ENCODE measurements at regions of chr10 and their contacts with region 1.

Region 1: DNA sequence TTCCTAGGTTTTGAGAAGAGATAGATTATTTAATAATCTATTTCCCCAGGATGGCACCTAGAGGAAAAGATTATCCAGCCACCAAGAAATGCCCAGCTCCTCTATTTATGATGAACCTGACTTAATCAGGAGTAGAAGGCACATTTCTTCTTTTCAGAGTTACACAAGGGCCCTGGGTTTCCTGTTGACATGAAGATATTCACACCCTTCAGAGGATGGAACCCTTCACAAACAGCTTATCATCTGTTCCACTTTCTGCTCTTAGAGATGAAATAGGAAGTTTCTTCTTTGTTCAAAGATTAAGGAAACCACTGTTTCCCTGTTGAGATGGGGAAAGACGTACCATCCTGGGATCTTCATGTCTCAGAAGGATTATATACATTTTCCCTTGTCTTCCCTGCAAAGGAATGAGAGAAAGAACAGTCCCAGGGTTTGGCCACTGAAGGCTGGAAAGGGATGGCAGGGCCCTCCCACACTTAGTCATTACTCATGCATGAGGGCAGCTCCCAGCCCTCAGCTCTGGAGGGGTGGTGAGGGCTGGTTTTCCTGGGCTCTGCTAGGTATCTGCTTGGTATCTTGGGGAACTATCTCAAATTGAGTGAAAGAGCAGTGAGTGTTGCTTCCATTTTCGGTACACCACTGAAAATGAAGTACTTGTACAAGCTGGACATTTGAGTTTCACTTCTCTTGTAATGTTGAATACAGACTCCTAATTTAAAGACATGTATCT is 64.0 kb downstream of the MTPAP start:
- DNase-seq: no peak
- ATAC-seq: peak; percentile 49
- H3K4me3 Mint-ChIP-seq: peak overlapping the region; percentile 21
- H3K27ac Mint-ChIP-seq: peak overlapping the region; percentile 81
- H3K4me1 Mint-ChIP-seq: peaks cover 36% of the 10 kb centered on the region
- H3K27me3 Mint-ChIP-seq: no peaks in the 10 kb centered on the region
- CTCF ChIP-seq: no peak

Region 2: GRCh38 chr10:30348378-30348776 is 63.3 kb after region 1 on chr10:
- CTCF ChIA-PET with region 1: no interaction called
- POLR2A ChIA-PET with region 1: interaction called, 20 read pairs
- intact Hi-C with region 1: no loop called
- DNase-seq: no peak
- ATAC-seq: no peak
- H3K4me3 Mint-ChIP-seq: peak overlapping the region; percentile 99
- H3K27ac Mint-ChIP-seq: peak overlapping the region; percentile 95
- H3K4me1 Mint-ChIP-seq: peaks cover 46% of the 10 kb centered on the region
- H3K27me3 Mint-ChIP-seq: no peaks in the 10 kb centered on the region
- CTCF ChIP-seq: no peak

Region 3: DNA sequence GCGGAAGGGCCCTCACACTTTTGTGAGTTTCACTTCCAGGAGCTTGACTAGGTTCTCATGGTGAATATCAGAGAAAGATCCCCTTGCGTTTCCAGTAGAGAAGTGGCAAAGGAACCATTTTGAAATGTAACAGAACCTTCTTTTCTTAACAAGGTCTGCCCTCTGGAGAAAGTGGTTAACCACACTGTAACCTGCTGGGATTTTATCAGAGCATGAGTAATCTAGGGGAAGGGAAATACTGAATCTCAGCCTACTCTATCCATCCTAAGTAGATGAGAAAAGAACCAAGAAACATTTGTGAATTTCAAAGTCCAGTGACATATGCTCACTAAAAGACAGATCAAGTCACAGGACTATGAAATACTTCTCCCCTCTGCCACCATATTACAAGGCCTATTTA is 1269.5 kb after region 1 on chr10:
- CTCF ChIA-PET with region 1: no interaction called
- POLR2A ChIA-PET with region 1: no interaction called
- intact Hi-C with region 1: no loop called
- DNase-seq: no peak
- ATAC-seq: no peak
- H3K4me3 Mint-ChIP-seq: no peak overlapping the region
- H3K27ac Mint-ChIP-seq: no peak overlapping the region
- H3K4me1 Mint-ChIP-seq: no peaks in the 10 kb centered on the region
- H3K27me3 Mint-ChIP-seq: peaks cover 6% of the 10 kb centered on the region
- CTCF ChIP-seq: no peak

Measured in activated B cell treated with CpG ODN at 0.5 μM for 24 hours (primary cell).